Posterior cingulate gyrus (tissue), 11 donors: ENCODE measurements at regions of chr20 and their contacts with region 1.

Region 1: GRCh38 chr20:45771182-45771759 is 20.4 kb downstream of the WFDC3 start:
- DNase-seq: peak; percentile 45 to 96 (median 79)

Region 2: DNA sequence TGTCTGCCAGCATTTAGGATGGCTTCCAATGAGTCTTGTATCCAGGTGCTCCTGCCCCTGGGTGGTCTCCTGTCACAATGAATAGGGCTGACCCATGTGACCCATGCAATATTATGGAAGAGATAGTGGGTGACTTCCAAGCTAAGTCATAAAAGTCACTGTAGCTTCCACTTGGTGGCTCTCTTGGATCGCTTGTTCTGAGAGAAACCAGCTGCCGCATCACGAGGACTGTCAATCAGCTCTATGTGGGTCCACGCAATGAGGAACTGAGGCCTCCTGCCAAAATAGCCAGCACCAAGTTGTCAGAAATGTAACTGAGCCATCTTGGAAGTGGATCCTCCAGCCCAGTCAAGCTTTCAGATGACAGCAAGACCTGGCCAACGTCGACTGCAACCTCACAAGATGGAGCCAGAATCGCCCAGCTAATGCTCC is 448.3 kb before region 1 on chr20:
- intact Hi-C with region 1: loop called (anchors 1 kb)
- DNase-seq: peak in 6 of 10 donors; percentile 47 to 91 (median 57)

Region 3: GRCh38 chr20:45545754-45546453 is 225.4 kb before region 1 on chr20:
- intact Hi-C with region 1: loop called (anchors 1 kb)
- DNase-seq: no peak

Region 4: GRCh38 chr20:45592574-45593189 is 178.6 kb before region 1 on chr20:
- intact Hi-C with region 1: loop called (anchors 2 kb)
- DNase-seq: no peak